Activated CD4-positive, alpha-beta T cell treated with anti-CD3 and anti-CD28 coated beads for 36 hours (primary cell): ENCODE measurements at regions of chr6 and their contacts with region 1.

Region 1: DNA sequence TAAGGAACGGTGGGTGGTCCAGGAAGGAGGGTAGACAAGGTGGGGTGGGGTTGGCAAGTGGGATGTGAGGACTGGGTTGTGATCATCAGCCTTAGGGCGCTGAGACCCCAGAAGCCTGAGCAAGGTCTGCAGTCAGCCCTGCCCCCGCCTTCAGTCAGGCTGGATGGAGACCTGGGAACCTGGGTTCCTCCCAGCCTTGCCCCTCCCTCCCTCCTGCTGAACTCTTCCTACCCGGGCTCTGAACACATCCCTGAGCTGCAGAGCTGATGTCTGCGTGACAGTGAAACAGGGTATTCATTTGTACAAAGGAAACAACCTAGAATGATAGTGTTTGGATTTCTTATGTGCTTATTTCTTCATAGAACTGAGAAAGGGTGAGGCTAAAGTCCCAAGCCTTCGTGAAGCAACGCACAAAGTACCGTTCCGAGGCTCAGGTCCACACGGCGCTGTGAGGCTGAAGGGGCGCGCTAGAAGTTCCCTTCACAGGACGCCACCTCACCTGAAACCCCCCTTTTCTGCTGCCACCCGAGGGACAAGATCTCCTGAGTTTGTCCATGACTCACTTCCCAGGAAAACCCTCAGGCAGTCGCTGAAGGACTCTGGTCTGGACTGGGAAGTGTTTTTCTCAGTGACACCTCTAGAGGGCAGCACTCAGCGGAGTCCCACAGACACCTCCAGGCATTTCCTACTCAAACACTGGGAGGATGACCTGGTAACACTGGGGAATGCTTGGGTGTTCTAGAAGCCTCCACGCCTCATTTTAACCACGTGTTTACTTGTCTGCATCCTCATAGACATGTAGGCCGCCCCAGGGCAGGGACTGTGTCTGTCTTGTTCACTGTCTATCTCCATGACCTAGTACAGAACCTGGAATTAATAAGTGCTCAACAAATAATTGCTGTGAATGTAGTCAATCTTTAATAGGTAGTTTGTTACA is 1.2 kb downstream of the GSTA5 start:
- DNase-seq: peak; percentile 67
- ATAC-seq: peak; percentile 91
- H3K4me3 Mint-ChIP-seq: no peak overlapping the region
- H3K27ac Mint-ChIP-seq: no peak overlapping the region
- H3K4me1 Mint-ChIP-seq: peaks cover 3% of the 10 kb centered on the region
- H3K27me3 Mint-ChIP-seq: peaks cover 30% of the 10 kb centered on the region

Region 2: GRCh38 chr6:52881996-52882841 is 42.8 kb after region 1 on chr6:
- CTCF ChIA-PET with region 1: interaction called, 5 read pairs
- POLR2A ChIA-PET with region 1: no interaction called
- intact Hi-C with region 1: loop called in 1 of 2 experiments (anchors 2 kb)
- DNase-seq: peak; percentile 77
- ATAC-seq: peak; percentile 98
- H3K4me3 Mint-ChIP-seq: peak overlapping the region; percentile 73
- H3K27ac Mint-ChIP-seq: peak overlapping the region; percentile 81
- H3K4me1 Mint-ChIP-seq: peaks cover 8% of the 10 kb centered on the region
- H3K27me3 Mint-ChIP-seq: no peaks in the 10 kb centered on the region